MCF 10A (cell line): ENCODE measurements at regions of chr5 and their contacts with region 1.

Region 1: DNA sequence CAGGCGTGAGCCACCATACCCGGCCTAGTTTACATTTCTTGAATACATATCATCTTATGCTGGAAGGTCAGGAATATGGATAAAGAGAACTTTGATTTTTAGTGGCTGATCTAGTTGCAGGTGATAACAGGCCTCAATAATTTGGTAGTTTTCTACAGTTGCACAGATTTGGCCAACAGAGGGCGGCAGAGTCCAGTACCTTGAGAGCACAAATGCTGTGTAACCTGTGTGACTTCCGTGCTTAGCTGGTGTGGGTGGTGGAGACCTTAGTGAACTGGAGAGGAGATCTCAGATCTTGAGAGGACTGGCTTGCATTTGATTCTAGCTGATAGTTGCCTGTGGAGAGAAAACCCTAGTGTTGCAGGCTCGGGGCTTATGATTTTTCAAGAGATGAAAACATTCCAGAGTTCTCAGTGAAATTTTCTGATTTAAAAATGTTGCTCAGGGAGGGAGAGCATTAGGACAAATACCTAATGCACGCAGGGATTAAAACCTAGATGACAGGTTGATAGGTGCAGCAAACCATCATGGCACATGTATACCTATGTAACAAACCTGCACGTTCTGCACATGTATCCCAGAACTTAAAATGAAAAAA is 17.4 kb upstream of the GPR151 start:
- DNase-seq: peak; percentile 90
- H3K4me3 Mint-ChIP-seq: no peak overlapping the region
- H3K27ac Mint-ChIP-seq: no peak overlapping the region
- H3K4me1 Mint-ChIP-seq: peaks cover 8% of the 10 kb centered on the region
- H3K27me3 Mint-ChIP-seq: no peaks in the 10 kb centered on the region
- CTCF ChIP-seq: peak; percentile 96

Region 2: DNA sequence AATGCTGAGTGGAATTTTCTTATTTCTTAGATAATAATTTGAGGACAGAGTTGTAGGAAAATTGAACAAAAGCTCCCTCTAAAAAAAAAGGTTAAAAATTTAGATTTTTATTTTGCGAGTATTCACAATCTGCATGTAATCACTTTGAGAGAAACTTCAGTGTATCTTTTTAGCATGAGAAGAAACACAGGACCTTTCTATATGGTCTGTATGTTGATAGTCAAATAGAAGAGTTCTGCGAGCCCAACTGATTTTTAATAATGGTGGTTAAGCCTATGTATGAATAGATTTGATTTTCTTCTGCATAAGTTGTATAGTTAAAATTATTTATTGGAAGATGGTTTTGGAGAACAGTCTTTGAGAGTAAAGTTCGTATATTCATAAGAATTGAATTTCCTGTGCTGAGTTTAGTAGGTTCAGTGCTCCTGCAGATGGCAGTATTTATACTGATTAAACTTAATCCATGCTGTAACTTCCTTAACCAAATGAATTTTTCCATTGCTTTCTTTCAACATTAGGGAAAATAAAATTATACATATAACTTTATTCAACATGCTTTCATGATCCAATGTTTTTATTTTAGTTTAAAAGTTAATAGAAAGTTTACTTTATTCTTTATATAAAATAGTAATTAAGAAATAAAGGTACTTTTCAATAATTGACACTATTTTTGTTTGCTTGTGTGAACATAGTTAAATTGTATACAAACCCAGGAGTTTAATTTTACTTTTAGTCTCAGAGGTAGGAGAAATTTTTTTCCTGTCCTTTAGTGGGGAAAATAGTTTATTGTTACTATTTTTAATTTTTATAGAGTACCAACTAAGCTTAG is 66.6 kb before region 1 on chr5:
- CTCF ChIA-PET with region 1: interaction called, 15 read pairs
- POLR2A ChIA-PET with region 1: interaction called, 3 read pairs
- intact Hi-C with region 1: no loop called
- DNase-seq: peak; percentile 32
- H3K4me3 Mint-ChIP-seq: no peak overlapping the region
- H3K27ac Mint-ChIP-seq: no peak overlapping the region
- H3K4me1 Mint-ChIP-seq: peaks cover 28% of the 10 kb centered on the region
- H3K27me3 Mint-ChIP-seq: no peaks in the 10 kb centered on the region
- CTCF ChIP-seq: peak; percentile 46

Region 3: DNA sequence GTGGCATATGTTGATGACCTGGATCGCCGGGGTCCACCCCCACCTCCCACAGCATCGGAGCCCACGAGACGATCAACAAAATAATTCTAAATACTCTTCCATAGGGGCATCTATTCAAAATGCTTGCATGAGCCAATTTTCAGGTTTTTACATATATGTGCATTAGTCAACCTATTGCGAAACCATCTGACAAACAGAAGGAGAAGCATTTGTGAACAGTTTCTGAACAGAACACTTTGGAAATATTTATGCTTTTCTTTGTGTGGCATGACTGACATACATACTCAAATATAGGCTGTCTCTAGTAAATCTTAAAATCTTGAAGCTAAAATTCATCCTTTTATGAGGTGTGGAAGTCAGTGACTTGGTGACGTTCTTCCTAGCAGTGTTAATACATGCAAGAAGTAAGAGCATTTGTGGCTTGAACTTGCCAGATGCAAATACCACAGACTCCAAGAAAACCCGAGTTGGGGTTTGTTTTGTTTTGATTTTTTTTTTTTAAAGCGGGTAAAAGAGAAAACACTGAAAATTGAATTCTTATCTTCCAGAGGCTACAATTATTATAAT is 22.7 kb before region 1 on chr5:
- CTCF ChIA-PET with region 1: interaction called, 32 read pairs
- POLR2A ChIA-PET with region 1: interaction called, 5 read pairs
- intact Hi-C with region 1: no loop called
- DNase-seq: peak; percentile 76
- H3K4me3 Mint-ChIP-seq: no peak overlapping the region
- H3K27ac Mint-ChIP-seq: no peak overlapping the region
- H3K4me1 Mint-ChIP-seq: peaks cover 8% of the 10 kb centered on the region
- H3K27me3 Mint-ChIP-seq: no peaks in the 10 kb centered on the region
- CTCF ChIP-seq: no peak

Region 4: DNA sequence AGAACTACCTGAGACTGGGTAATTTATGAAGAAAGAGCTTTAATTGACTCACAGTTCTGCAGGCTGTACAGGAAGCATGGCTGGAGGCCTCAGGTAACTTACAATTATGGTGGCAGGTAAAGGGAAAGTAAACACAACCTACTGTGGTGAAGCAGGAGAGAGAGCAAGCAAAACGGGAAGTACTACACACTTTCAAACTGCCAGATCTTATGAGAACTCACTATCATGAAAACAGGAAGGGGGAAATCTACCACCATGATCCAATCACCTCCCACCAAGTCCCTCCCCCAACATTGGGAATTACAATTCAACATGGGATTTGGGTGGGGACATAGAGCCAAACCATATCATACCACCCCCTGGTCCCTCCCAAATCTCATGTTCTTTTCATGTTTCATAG is 41.4 kb after region 1 on chr5:
- CTCF ChIA-PET with region 1: interaction called, 13 read pairs
- POLR2A ChIA-PET with region 1: no interaction called
- intact Hi-C with region 1: no loop called
- DNase-seq: no peak
- H3K4me3 Mint-ChIP-seq: no peak overlapping the region
- H3K27ac Mint-ChIP-seq: no peak overlapping the region
- H3K4me1 Mint-ChIP-seq: no peaks in the 10 kb centered on the region
- H3K27me3 Mint-ChIP-seq: peaks cover 21% of the 10 kb centered on the region
- CTCF ChIP-seq: no peak

Region 5: GRCh38 chr5:147200001-147200400 is 666.6 kb after region 1 on chr5:
- CTCF ChIA-PET with region 1: interaction called, 11 read pairs
- POLR2A ChIA-PET with region 1: no interaction called
- intact Hi-C with region 1: no loop called
- DNase-seq: no peak
- H3K4me3 Mint-ChIP-seq: no peak overlapping the region
- H3K27ac Mint-ChIP-seq: no peak overlapping the region
- H3K4me1 Mint-ChIP-seq: no peaks in the 10 kb centered on the region
- H3K27me3 Mint-ChIP-seq: peaks cover 55% of the 10 kb centered on the region
- CTCF ChIP-seq: no peak